CD4-positive, alpha-beta memory T cell (primary cell): ENCODE measurements at regions of chr3 and their contacts with region 1.

Region 1: DNA sequence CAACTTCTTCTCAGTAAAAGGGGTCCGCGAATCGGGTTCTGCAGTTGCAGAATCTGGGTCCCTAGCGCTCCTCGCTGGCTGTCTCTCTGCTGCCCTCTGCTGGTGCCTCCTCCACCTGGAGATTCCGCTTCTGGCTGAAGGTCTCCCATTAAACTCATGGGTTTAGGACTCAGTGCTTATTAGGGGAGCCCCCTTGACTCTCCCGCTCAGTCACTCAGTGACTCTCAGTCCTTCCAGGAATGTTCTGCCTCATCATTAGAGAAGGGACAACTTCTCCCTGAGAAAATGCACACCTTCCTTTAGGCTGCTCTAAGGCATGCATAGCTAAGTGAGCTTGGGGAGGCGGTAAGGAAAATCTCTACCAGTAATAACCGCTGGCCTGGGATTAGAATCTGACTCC is 7.1 kb downstream of the CPN2 start:
- DNase-seq: peak; percentile 56 to 63 (median 59)
- H3K4me3 ChIP-seq: no peak overlapping the region
- H3K4me3 Mint-ChIP-seq: peak overlapping the region in 1 of 8 donors; percentile 48
- H3K27ac ChIP-seq: no peak overlapping the region
- H3K27ac Mint-ChIP-seq: no peak overlapping the region
- H3K4me1 ChIP-seq: no peaks in the 10 kb centered on the region
- H3K4me1 Mint-ChIP-seq: no peaks in the 10 kb centered on the region
- H3K27me3 ChIP-seq: no peaks in the 10 kb centered on the region
- H3K27me3 Mint-ChIP-seq: peaks cover 1 to 7% of the 10 kb centered on the region in 2 donors

Region 2: DNA sequence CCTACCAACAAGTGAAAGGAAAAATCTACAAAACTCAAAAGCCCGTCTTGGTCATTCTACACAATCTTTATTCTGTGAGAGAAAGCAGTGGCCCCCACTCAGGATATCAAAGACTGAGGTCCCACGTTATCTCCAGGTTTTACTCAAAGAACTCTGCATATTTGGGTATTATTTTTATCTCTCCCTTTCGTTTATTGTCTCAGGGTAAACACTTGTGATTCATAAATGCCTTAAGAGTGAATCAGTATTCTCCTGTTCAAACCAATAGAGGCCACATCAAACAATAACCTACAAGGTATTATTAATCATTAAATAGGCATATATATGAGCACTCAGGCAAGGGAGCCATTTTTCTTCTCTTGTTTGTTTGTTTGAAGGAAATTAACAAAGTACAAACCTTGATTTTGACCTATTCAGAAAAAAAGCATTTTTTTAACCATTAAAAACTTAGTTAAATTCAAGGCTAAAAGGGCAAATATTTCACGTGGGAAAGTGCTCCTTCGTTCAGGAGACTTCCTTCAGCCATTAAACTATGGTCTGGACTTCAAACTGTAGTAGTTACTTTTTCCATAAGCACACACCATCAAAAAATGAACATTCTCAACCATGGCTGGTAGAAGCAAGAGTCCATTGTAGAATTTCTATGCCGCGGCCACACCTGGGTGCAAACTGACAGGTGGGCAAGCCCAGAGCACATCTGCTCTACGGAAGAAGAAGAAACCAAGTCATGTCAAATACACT is 222.0 kb before region 1 on chr3:
- CTCF ChIA-PET with region 1: no interaction called
- POLR2A ChIA-PET with region 1: no interaction called
- intact Hi-C with region 1: no loop called
- DNase-seq: no peak
- H3K4me3 ChIP-seq: no peak overlapping the region
- H3K4me3 Mint-ChIP-seq: no peak overlapping the region
- H3K27ac ChIP-seq: no peak overlapping the region
- H3K27ac Mint-ChIP-seq: no peak overlapping the region
- H3K4me1 ChIP-seq: no peaks in the 10 kb centered on the region
- H3K4me1 Mint-ChIP-seq: no peaks in the 10 kb centered on the region
- H3K27me3 ChIP-seq: no peaks in the 10 kb centered on the region
- H3K27me3 Mint-ChIP-seq: peaks cover 18 to 34% of the 10 kb centered on the region in 2 donors

Region 3: DNA sequence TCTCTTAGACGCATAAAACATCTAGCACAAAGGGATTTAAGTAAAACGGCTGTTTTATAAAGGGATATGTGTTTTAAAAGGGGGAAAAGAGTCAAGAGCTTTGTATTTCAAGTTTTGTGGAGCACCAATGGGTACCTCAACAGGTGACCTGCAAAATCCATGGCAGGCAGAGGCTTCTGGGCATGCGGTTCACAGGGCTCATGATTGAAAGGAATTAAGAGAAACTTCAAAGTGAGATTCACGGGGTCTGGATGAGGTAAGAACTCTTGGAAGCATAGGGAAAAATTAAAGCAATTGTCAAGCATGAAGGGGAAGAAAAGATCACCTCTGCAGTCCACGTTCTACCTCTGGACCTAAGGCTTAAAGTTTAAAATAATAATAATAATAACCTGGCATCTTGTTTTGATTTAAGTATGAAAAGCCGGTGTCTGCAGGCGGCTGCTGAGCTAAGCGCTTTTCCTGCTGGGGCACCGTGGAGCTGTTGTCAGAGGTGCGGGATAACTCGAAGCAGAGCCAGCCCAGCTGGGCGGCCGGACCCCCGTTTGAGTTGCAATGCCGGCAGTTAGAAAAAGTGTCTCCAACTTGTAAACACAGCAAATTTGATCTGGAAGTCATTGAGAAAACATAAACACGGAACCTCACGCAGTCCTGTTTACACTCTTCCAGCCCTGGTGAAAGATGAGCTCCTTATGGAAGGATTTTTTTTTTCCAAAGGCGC is 167.6 kb before region 1 on chr3:
- CTCF ChIA-PET with region 1: no interaction called
- POLR2A ChIA-PET with region 1: no interaction called
- intact Hi-C with region 1: no loop called
- DNase-seq: no peak
- H3K4me3 ChIP-seq: no peak overlapping the region
- H3K4me3 Mint-ChIP-seq: no peak overlapping the region
- H3K27ac ChIP-seq: no peak overlapping the region
- H3K27ac Mint-ChIP-seq: no peak overlapping the region
- H3K4me1 ChIP-seq: no peaks in the 10 kb centered on the region
- H3K4me1 Mint-ChIP-seq: no peaks in the 10 kb centered on the region
- H3K27me3 ChIP-seq: no peaks in the 10 kb centered on the region
- H3K27me3 Mint-ChIP-seq: peaks cover 10 to 15% of the 10 kb centered on the region in 2 donors

Region 4: DNA sequence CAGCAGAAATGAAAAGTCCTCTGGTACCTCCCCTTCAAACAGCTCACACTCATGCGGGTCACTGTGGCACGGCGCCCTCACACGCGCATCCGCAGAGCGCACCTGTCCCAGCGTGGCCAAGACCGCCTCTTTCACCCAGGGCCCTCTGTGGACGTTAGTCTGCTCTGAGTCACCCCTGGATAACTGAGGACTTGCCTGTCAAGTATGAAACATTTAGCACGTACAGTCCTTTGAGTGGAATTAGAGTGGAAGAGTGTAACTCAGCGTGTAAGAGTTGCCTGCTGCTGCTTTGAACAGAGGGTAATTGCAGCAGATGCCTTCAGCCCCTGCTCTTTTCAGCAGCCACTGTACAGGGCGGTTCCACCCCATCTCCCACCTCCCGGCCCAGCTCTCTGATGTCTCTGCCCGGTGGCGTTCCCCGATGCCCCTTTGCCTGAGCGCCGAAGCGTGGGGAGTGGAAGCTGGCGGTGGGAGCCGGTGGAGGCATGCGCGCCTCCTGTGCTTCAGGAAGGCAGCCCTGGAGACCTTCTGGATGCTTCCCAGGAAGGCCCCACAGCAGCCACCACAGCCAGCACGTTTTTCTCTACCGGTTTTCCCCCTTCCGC is 15.9 kb before region 1 on chr3:
- CTCF ChIA-PET with region 1: interaction called, 92 read pairs
- POLR2A ChIA-PET with region 1: no interaction called
- intact Hi-C with region 1: loop called (anchors 1 kb)
- DNase-seq: peak in 4 of 5 donors; percentile 19 to 73 (median 40)
- H3K4me3 ChIP-seq: no peak overlapping the region
- H3K4me3 Mint-ChIP-seq: peak overlapping the region in 1 of 8 donors; percentile 35
- H3K27ac ChIP-seq: no peak overlapping the region
- H3K27ac Mint-ChIP-seq: peak overlapping the region in 1 of 7 donors; percentile 64
- H3K4me1 ChIP-seq: peaks cover 10% of the 10 kb centered on the region
- H3K4me1 Mint-ChIP-seq: peaks cover 0 to 1% (median 0%) of the 10 kb centered on the region in 4 donors
- H3K27me3 ChIP-seq: peaks cover 10% of the 10 kb centered on the region
- H3K27me3 Mint-ChIP-seq: peaks cover 9 to 16% of the 10 kb centered on the region in 2 donors

Region 5: GRCh38 chr3:194353956-194354714 is 10.1 kb after region 1 on chr3:
- CTCF ChIA-PET with region 1: interaction called, 17 read pairs
- POLR2A ChIA-PET with region 1: no interaction called
- intact Hi-C with region 1: no loop called
- DNase-seq: no peak
- H3K4me3 ChIP-seq: no peak overlapping the region
- H3K4me3 Mint-ChIP-seq: no peak overlapping the region
- H3K27ac ChIP-seq: no peak overlapping the region
- H3K27ac Mint-ChIP-seq: no peak overlapping the region
- H3K4me1 ChIP-seq: no peaks in the 10 kb centered on the region
- H3K4me1 Mint-ChIP-seq: no peaks in the 10 kb centered on the region
- H3K27me3 ChIP-seq: no peaks in the 10 kb centered on the region
- H3K27me3 Mint-ChIP-seq: peaks cover 2 to 4% of the 10 kb centered on the region in 2 donors

Region 6: GRCh38 chr3:194404365-194405140 is 60.5 kb after region 1 on chr3:
- CTCF ChIA-PET with region 1: interaction called, 94 read pairs
- POLR2A ChIA-PET with region 1: no interaction called
- intact Hi-C with region 1: loop called (anchors 1 kb)
- DNase-seq: peak; percentile 42 to 61 (median 56)
- H3K4me3 ChIP-seq: no peak overlapping the region
- H3K4me3 Mint-ChIP-seq: peak overlapping the region in 2 of 8 donors; percentile 43 to 75
- H3K27ac ChIP-seq: no peak overlapping the region
- H3K27ac Mint-ChIP-seq: peak overlapping the region in 2 of 7 donors; percentile 1 to 14
- H3K4me1 ChIP-seq: peaks cover 9% of the 10 kb centered on the region
- H3K4me1 Mint-ChIP-seq: peaks cover under 1 to 14% (median 7%) of the 10 kb centered on the region in 4 donors
- H3K27me3 ChIP-seq: no peaks in the 10 kb centered on the region
- H3K27me3 Mint-ChIP-seq: peaks cover 0 to 2% of the 10 kb centered on the region in 2 donors